ENCODE measurements at regions of chr1 and their contacts with region 1.

Region 1: GRCh38 chr1:93814059-93814794 is 64.8 kb downstream of the DNTTIP2 start:
- DNase-seq: peak; percentile 82
- ATAC-seq: peak; percentile 81
- H3K4me3 ChIP-seq: no peak overlapping the region
- H3K27ac ChIP-seq: no peak overlapping the region
- H3K4me1 ChIP-seq: peaks cover 8 to 34% of the 10 kb centered on the region in 2 experiments
- H3K27me3 ChIP-seq: no peaks in the 10 kb centered on the region
- CTCF ChIP-seq: peak; percentile 94 to 100 (median 96)
- POLR2A ChIP-seq: no peak
- RAD21 ChIP-seq: peak; percentile 100

Region 2: DNA sequence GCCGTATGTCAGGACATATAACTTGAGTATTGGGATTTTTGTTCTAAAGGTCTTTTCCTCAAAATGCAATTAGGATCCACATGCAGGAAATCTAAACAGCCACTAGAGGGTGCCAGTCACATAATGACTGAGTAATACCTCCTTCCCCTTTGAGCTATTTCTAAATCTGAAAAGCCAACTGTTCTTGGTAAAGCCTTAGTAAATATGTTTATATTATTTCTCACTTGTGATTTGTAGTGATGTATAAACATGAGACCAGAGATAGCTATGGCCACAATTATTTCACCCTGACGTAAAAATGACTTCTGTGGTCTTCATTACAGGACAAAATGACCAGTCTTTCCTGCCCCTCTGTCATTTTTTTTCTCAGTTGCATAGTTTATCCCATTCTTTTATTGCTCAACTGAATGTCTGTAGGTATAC is 509.5 kb before region 1 on chr1:
- CTCF ChIA-PET with region 1: interaction called, 18 read pairs
- POLR2A ChIA-PET with region 1: no interaction called
- RAD21 ChIA-PET with region 1: no interaction called
- intact Hi-C with region 1: loop called (anchors 10 kb)
- DNase-seq: peak; percentile 35
- ATAC-seq: peak; percentile 77
- H3K4me3 ChIP-seq: no peak overlapping the region
- H3K27ac ChIP-seq: no peak overlapping the region
- H3K4me1 ChIP-seq: no peaks in the 10 kb centered on the region
- H3K27me3 ChIP-seq: no peaks in the 10 kb centered on the region
- CTCF ChIP-seq: peak; percentile 61 to 93 (median 78); a peak in 5 of 6 replicates
- POLR2A ChIP-seq: no peak
- RAD21 ChIP-seq: peak; percentile 87

Region 3: DNA sequence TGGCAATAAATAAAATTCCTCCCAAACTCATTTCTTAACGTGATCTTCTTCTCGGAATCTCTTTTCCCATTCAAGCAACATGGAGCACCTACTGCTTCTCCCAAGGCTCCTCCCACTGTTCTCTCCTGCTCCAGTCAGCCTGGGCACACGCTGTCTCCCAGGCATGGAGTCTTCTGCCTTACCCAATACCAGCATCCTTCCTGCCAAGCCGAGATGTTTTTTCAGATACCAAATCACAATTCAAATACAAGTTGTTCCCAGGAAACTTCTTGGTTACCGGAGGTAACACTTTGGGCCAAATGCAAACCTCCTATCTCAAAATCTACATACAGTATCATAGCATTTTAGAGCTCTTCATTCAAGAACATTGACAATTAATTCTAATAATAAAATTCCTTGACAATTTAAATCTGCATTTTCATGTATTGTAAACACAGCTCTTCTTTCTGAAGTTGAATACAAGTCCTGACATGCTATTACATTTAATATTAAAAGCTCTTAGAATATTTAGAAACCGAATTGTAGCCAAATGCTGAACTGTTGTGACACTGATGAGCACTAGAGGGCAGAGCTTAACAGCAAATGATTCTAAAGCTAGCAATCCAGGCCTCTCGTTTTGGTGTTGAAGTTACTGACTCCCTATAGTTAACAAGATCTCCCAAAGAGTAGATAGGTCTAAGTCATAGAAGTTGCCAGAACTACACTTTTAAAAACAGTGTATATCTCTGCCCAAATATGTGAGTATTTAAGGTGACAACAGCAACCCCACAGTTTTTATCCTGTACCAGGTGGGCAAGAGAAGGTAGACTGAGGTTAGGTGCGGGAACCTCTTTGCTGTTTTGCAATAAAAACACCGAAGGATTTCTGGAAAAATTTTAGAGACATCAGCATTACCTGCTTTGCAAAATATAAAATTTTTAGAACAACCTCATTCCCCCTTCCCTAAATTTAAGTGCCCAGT is 184.8 kb before region 1 on chr1:
- CTCF ChIA-PET with region 1: interaction called, 208 read pairs
- POLR2A ChIA-PET with region 1: interaction called, 8 read pairs
- RAD21 ChIA-PET with region 1: interaction called, 40 to 59 read pairs
- intact Hi-C with region 1: loop called (anchors 1 kb)
- DNase-seq: peak; percentile 59
- ATAC-seq: peak; percentile 72
- H3K4me3 ChIP-seq: no peak overlapping the region
- H3K27ac ChIP-seq: no peak overlapping the region
- H3K4me1 ChIP-seq: peaks cover 0 to 69% of the 10 kb centered on the region in 2 experiments; a peak in 3 of 4 replicates
- H3K27me3 ChIP-seq: no peaks in the 10 kb centered on the region
- CTCF ChIP-seq: peak; percentile 72 to 90 (median 88)
- POLR2A ChIP-seq: no peak
- RAD21 ChIP-seq: peak; percentile 97

Region 4: GRCh38 chr1:93701619-93702018 is 112.6 kb before region 1 on chr1:
- CTCF ChIA-PET with region 1: interaction called, 10 read pairs
- POLR2A ChIA-PET with region 1: interaction called, 10 read pairs
- RAD21 ChIA-PET with region 1: interaction called in 1 of 2 experiments, 3 read pairs
- intact Hi-C with region 1: no loop called
- DNase-seq: peak; percentile 97
- ATAC-seq: peak; percentile 84
- H3K4me3 ChIP-seq: peak overlapping the region in 1 of 2 experiments; percentile 6; a peak in 1 of 4 replicates
- H3K27ac ChIP-seq: peak overlapping the region; percentile 74
- H3K4me1 ChIP-seq: peaks cover 41 to 97% of the 10 kb centered on the region in 2 experiments
- H3K27me3 ChIP-seq: no peaks in the 10 kb centered on the region
- CTCF ChIP-seq: no peak
- POLR2A ChIP-seq: no peak
- RAD21 ChIP-seq: no peak

Region 5: GRCh38 chr1:93800856-93801255 is 13.4 kb before region 1 on chr1:
- CTCF ChIA-PET with region 1: interaction called, 6 read pairs
- POLR2A ChIA-PET with region 1: no interaction called
- RAD21 ChIA-PET with region 1: interaction called in 1 of 2 experiments, 3 read pairs
- intact Hi-C with region 1: loop called (anchors 1 kb)
- DNase-seq: no peak
- ATAC-seq: no peak
- H3K4me3 ChIP-seq: no peak overlapping the region
- H3K27ac ChIP-seq: no peak overlapping the region
- H3K4me1 ChIP-seq: peaks cover 0 to 28% of the 10 kb centered on the region in 2 experiments; a peak in 2 of 4 replicates
- H3K27me3 ChIP-seq: no peaks in the 10 kb centered on the region
- CTCF ChIP-seq: no peak
- POLR2A ChIP-seq: no peak
- RAD21 ChIP-seq: no peak